Gastrocnemius medialis (tissue), 4 donors: ENCODE measurements at regions of chr9 and their contacts with region 1.

Region 1: GRCh38 chr9:129110740-129111527 is at the starts of genes CRAT and PTPA:
- DNase-seq: peak; percentile 98
- ATAC-seq: peak; percentile 78 to 84
- H3K4me3 ChIP-seq: peak within 1 kb of the TSS; percentile 68 to 99 (median 91)
- H3K27ac ChIP-seq: peak within 1 kb of the TSS; percentile 92 to 99 (median 96)
- H3K4me1 ChIP-seq: peaks cover 55 to 60% of the 10 kb centered on the region in 2 donors
- H3K27me3 ChIP-seq: no peaks in the 10 kb centered on the region
- CTCF ChIP-seq: peak in 1 of 5 experiments; percentile 12
- POLR2A ChIP-seq: peak; percentile 97 to 99
- total RNA-seq, gene CRAT: 137 to 167 (median 144) TPM
- total RNA-seq, gene PTPA: 37.6 to 71.6 (median 53.5) TPM

Region 2: GRCh38 chr9:129028192-129028957 is 82.6 kb before region 1 on chr9 and contains the start of gene SH3GLB2:
- in situ Hi-C with region 1: no loop called
- intact Hi-C with region 1: loop called (anchors 2 kb)
- DNase-seq: peak; percentile 93 to 95
- ATAC-seq: peak; percentile 68 to 72
- H3K4me3 ChIP-seq: peak within 1 kb of the TSS; percentile 64 to 81 (median 74)
- H3K27ac ChIP-seq: peak within 1 kb of the TSS; percentile 81 to 90 (median 86)
- H3K4me1 ChIP-seq: peaks cover 24% of the 10 kb centered on the region in 2 donors
- H3K27me3 ChIP-seq: no peaks in the 10 kb centered on the region
- CTCF ChIP-seq: peak; percentile 78 to 95 (median 85)
- POLR2A ChIP-seq: peak; percentile 56 to 78
- total RNA-seq, gene SH3GLB2: 33.6 to 55.1 (median 44.1) TPM

Region 3: DNA sequence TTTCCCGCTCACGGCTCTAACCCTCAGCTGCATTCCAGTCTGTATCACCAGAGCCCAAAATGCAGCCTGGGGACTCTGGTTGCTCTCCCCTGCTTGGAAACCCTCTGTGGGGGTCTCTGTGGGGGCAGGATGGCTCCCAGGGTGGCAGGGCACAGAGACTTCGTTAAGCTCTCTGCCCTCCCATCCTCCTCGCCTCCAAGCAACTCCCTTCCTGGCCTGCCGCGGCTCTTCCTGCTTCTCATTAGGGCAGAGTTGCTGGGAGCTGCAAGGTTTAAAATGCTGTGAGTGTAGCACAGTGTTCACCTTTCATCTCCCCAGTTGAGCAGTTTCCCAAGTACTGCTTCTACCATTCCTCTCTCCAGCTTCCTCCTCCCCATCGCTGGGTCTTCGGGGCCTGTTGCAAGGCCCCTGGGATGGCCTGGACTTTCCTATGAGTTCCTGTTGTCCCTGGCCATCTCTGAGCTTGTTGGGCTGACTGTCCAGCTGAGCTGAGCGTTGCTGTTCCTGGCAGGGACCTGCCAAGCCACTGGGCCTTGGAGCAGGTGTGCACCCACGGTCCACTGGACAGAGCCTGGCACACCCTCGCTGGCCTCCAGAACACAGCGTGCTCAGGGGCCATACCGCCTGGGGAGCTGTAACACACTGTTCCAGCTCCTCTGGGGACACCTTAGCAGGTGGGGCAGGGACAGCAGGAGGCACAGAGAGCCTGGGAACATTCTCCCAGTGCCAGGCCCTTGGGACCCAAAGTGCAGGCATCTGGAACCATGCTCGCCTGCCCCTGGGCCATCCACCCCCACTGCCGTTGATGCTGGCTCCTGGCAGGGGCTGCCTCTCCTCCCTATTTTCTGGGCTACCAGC is 321.6 kb after region 1 on chr9:
- in situ Hi-C with region 1: no loop called
- intact Hi-C with region 1: no loop called
- DNase-seq: peak; percentile 44 to 73
- ATAC-seq: peak; percentile 48 to 67
- H3K4me3 ChIP-seq: no peak overlapping the region
- H3K27ac ChIP-seq: peak overlapping the region in 1 of 4 donors; percentile 71
- H3K4me1 ChIP-seq: peaks cover 7 to 13% of the 10 kb centered on the region in 2 donors
- H3K27me3 ChIP-seq: peaks cover 4 to 9% (median 5%) of the 10 kb centered on the region in 3 donors
- CTCF ChIP-seq: no peak
- POLR2A ChIP-seq: no peak